Activated T-helper 1 cell treated with anti-CD3 and anti-CD28 coated beads, Interleukin-12 subunit alpha, Interleukin-12 subunit beta, Interleukin-2, Interleukin-4 antibody, amounts not matched to agents 30 ng/mL and 10 ng/mL and 1 ng/mL, durations not matched to agents 14 hours and 24 hours and 36 hours (primary cell): ENCODE measurements at regions of chr16 and their contacts with region 1.

Region 1: GRCh38 chr16:2023098-2023925 is 3.4 kb upstream of the NHERF2 start:
- DNase-seq: peak; percentile 92
- H3K4me3 Mint-ChIP-seq: peak overlapping the region; percentile 77
- H3K27ac Mint-ChIP-seq: no peak overlapping the region
- H3K4me1 Mint-ChIP-seq: peaks cover 16% of the 10 kb centered on the region
- H3K27me3 Mint-ChIP-seq: peaks cover 37% of the 10 kb centered on the region

Region 2: GRCh38 chr16:1913327-1914083 is 109.8 kb before region 1 on chr16:
- intact Hi-C with region 1: no loop called
- DNase-seq: no peak
- H3K4me3 Mint-ChIP-seq: no peak overlapping the region
- H3K27ac Mint-ChIP-seq: no peak overlapping the region
- H3K4me1 Mint-ChIP-seq: no peaks in the 10 kb centered on the region
- H3K27me3 Mint-ChIP-seq: peaks cover 21% of the 10 kb centered on the region

Region 3: GRCh38 chr16:1991948-1992703 is 31.2 kb before region 1 on chr16:
- intact Hi-C with region 1: loop called (anchors 1 kb)
- DNase-seq: peak; percentile 91
- H3K4me3 Mint-ChIP-seq: peak overlapping the region; percentile 82
- H3K27ac Mint-ChIP-seq: no peak overlapping the region
- H3K4me1 Mint-ChIP-seq: peaks cover 26% of the 10 kb centered on the region
- H3K27me3 Mint-ChIP-seq: peaks cover 11% of the 10 kb centered on the region

Region 4: DNA sequence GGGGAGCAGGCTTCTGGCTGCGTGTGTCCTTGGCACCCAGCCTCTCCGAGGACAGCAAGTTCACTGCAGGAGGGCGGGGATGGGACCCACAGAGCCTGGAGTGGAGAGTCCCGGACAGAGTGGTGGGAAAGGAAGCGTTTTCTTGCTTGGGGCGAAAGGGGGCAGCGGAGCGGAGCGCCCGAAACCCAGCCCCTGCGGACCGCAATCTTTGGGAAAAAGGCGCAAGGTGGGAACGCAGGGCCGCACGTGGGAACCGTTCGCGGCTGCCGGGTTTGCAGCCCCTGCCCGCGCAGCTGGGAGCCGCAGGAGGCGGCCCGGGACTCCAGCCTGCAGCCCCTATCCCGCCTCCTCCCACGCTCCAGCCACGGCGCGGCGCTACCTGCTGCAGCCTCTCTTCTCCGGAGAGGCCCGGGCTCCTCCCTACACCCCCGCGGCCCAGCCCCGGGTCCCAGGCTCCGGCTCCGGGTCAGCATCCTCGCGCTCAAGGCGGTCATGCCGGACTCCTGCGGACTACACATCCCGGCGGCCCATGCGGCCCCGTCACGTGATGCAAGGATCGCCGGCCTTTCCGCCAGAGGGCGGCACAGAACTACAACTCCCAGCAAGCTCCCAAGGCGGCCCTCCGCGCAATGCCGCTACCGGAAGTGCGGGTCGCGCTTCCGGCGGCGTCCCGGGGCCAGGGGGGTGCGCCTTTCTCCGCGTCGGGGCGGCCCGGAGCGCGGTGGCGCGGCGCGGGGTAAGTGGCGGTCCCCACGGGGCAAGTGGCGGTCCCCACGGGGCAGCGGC is 24.2 kb after region 1 on chr16 and contains the starts of genes NTHL1 and TSC2:
- intact Hi-C with region 1: loop called (anchors 1 kb)
- DNase-seq: peak; percentile 95
- H3K4me3 Mint-ChIP-seq: peak within 1 kb of the TSS; percentile 93
- H3K27ac Mint-ChIP-seq: peak within 1 kb of the TSS; percentile 83
- H3K4me1 Mint-ChIP-seq: peaks cover 21% of the 10 kb centered on the region
- H3K27me3 Mint-ChIP-seq: no peaks in the 10 kb centered on the region
- total RNA-seq, gene NTHL1: 50.0 and 52.7 TPM in 2 replicates
- total RNA-seq, gene TSC2: 96.4 and 111 TPM in 2 replicates

Region 5: GRCh38 chr16:2194852-2195321 is 171.6 kb after region 1 on chr16:
- intact Hi-C with region 1: loop called (anchors 5 kb)
- DNase-seq: peak; percentile 25
- H3K4me3 Mint-ChIP-seq: peak overlapping the region; percentile 15
- H3K27ac Mint-ChIP-seq: no peak overlapping the region
- H3K4me1 Mint-ChIP-seq: no peaks in the 10 kb centered on the region
- H3K27me3 Mint-ChIP-seq: peaks cover 32% of the 10 kb centered on the region